Caco-2 (cell line): ENCODE measurements at regions of chr2 and their contacts with region 1.

Region 1: DNA sequence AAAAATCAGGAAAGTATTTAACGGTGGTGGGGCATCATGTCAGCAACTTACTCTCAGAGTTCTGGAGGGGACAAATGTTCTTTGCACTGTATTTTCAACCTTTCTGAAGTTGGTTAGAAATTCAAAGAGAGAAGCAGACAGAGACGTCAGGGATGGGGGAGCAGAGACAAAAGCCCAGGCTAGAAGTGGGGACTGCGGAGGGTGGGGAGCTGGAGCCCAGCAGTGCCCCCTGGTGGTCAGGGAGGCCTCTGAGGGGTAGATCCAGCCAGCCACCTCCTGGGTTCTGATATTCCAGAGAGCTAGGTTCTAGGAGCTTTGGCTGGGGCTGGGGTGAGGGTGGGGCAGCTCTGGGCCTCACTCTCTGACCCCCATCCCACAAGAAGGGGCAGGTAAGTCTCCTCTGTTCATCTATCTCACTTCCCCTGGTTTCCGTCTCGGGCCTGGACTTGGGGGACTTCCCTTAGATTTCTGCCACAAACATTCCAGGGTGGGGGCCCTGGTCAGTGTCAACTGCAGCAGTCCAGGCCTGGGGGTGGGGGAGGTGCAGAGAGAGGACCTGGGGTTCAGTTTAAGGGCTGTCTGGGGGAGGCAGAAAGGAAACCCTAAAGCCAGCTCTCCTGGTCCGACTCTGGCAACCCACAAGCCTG is 8.9 kb downstream of the TNS1 start:
- DNase-seq: peak in 1 of 2 experiments; percentile 79
- H3K4me3 ChIP-seq: no peak overlapping the region
- H3K4me3 Mint-ChIP-seq: no peak overlapping the region
- H3K27ac Mint-ChIP-seq: no peak overlapping the region
- H3K4me1 ChIP-seq: peaks cover under 1% of the 10 kb centered on the region; the same call in 1 of the 2 replicates
- H3K4me1 Mint-ChIP-seq: peaks cover 3% of the 10 kb centered on the region
- H3K27me3 ChIP-seq: no peaks in the 10 kb centered on the region
- H3K27me3 Mint-ChIP-seq: no peaks in the 10 kb centered on the region
- CTCF ChIP-seq: peak; percentile 93 to 94

Region 2: GRCh38 chr2:217812170-217812569 is 181.8 kb before region 1 on chr2:
- CTCF ChIA-PET with region 1: no interaction called
- POLR2A ChIA-PET with region 1: no interaction called
- intact Hi-C with region 1: no loop called
- DNase-seq: no peak
- H3K4me3 ChIP-seq: no peak overlapping the region
- H3K4me3 Mint-ChIP-seq: no peak overlapping the region
- H3K27ac Mint-ChIP-seq: no peak overlapping the region
- H3K4me1 ChIP-seq: peaks cover 7% of the 10 kb centered on the region; the same call in 1 of the 2 replicates
- H3K4me1 Mint-ChIP-seq: peaks cover 6% of the 10 kb centered on the region
- H3K27me3 ChIP-seq: no peaks in the 10 kb centered on the region
- H3K27me3 Mint-ChIP-seq: no peaks in the 10 kb centered on the region
- CTCF ChIP-seq: no peak

Region 3: GRCh38 chr2:217943446-217944389 is 50.2 kb before region 1 on chr2:
- CTCF ChIA-PET with region 1: interaction called, 20 read pairs
- POLR2A ChIA-PET with region 1: no interaction called
- intact Hi-C with region 1: no loop called
- DNase-seq: peak; percentile 88 to 89
- H3K4me3 ChIP-seq: peak overlapping the region; percentile 48
- H3K4me3 Mint-ChIP-seq: peak overlapping the region; percentile 52
- H3K27ac Mint-ChIP-seq: no peak overlapping the region
- H3K4me1 ChIP-seq: peaks cover 35% of the 10 kb centered on the region
- H3K4me1 Mint-ChIP-seq: peaks cover 27% of the 10 kb centered on the region
- H3K27me3 ChIP-seq: no peaks in the 10 kb centered on the region
- H3K27me3 Mint-ChIP-seq: no peaks in the 10 kb centered on the region
- CTCF ChIP-seq: peak in 1 of 2 experiments; percentile 81

Region 4: GRCh38 chr2:218137514-218137913 is 143.6 kb after region 1 on chr2:
- CTCF ChIA-PET with region 1: no interaction called
- POLR2A ChIA-PET with region 1: no interaction called
- intact Hi-C with region 1: no loop called
- DNase-seq: no peak
- H3K4me3 ChIP-seq: no peak overlapping the region
- H3K4me3 Mint-ChIP-seq: no peak overlapping the region
- H3K27ac Mint-ChIP-seq: no peak overlapping the region
- H3K4me1 ChIP-seq: no peaks in the 10 kb centered on the region
- H3K4me1 Mint-ChIP-seq: no peaks in the 10 kb centered on the region
- H3K27me3 ChIP-seq: no peaks in the 10 kb centered on the region; the same call in none of the 2 replicates
- H3K27me3 Mint-ChIP-seq: peaks cover 13% of the 10 kb centered on the region
- CTCF ChIP-seq: no peak

Region 5: GRCh38 chr2:218691234-218691633 is 697.3 kb after region 1 on chr2:
- CTCF ChIA-PET with region 1: no interaction called
- POLR2A ChIA-PET with region 1: no interaction called
- intact Hi-C with region 1: no loop called
- DNase-seq: no peak
- H3K4me3 ChIP-seq: no peak overlapping the region
- H3K4me3 Mint-ChIP-seq: no peak overlapping the region
- H3K27ac Mint-ChIP-seq: no peak overlapping the region
- H3K4me1 ChIP-seq: no peaks in the 10 kb centered on the region
- H3K4me1 Mint-ChIP-seq: peaks cover 6% of the 10 kb centered on the region
- H3K27me3 ChIP-seq: no peaks in the 10 kb centered on the region
- H3K27me3 Mint-ChIP-seq: no peaks in the 10 kb centered on the region
- CTCF ChIP-seq: no peak